ENCODE measurements at regions of chr4 and their contacts with region 1.

Region 1: DNA sequence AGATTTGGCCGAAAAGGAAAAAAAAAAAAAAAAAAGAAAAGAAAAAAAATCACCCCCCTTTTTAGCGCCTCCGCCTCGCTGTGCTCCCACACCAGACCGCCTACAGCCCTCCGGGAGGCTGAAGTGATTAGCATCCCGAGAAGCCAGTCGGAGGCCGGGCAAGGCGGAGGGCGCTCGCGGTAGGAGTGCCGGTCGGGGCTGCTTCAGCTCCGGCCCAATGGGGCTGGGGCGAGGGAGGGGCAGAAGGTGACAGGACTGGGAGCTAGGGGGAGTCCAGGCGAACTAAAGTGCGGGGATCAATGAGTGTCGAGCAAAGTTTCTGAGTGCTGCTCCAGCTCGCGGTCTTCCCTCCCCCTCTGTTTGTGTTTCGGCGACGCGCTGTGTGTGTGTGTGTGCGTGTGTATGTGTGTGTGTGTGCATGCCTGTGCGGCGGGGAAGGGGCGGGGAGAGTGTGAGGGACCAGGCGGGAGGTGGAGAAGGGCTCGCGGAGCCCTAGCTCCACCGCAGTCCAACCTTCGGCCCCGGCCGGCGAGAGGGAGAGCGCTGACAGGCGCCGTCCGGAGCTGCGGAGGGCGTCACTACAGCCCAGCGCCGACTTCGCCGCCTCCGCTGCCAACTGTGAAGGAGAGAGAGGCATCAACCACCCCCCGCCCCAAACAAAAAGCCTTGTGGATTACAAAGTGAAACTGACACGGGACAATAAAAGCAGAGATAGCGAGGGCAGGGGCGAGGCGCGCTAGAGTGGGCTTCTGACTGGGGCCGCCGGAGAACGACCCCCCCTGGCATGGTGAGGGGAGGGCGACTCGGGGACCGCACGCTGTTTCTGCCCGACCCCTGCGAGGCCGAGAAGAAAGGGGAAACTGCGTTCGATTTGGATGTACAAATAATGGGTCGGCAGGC is at the start of gene FAT4:
- DNase-seq: peak; percentile 82
- H3K4me3 ChIP-seq: peak within 1 kb of the TSS; percentile 45 to 69 (median 68)
- H3K27ac ChIP-seq: peak within 1 kb of the TSS; percentile 82 to 93 (median 88)
- H3K4me1 ChIP-seq: peaks cover 0 to 16% (median 9%) of the 10 kb centered on the region in 4 donors
- H3K27me3 ChIP-seq: peaks cover 45% of the 10 kb centered on the region
- CTCF ChIP-seq: no peak
- EP300 ChIP-seq: no peak
- POLR2A ChIP-seq: peak; percentile 68
- total RNA-seq, gene FAT4: 4.1 to 15.9 (median 9.3) TPM

Region 2: DNA sequence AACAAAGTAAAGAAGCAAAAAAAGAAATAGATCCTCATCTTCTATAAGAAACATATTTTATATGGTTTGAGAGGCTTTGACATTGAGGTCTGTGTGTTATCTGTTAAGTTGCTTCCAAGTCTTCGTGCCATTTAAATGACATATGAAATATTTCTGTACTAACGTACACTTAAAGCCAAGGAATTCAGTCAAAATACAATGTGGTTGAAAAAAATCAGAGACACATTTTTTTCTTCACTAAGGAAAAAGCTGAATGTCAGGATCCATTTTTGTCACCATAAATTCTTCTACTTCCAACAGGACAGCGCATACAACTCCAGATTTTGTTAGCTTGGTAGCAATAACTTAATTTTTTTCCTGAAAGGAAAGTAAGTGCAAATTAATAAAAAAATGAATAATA is 168.4 kb after region 1 on chr4:
- in situ Hi-C with region 1: no loop called
- intact Hi-C with region 1: loop called (anchors 10 kb)
- DNase-seq: no peak
- H3K4me3 ChIP-seq: no peak overlapping the region
- H3K27ac ChIP-seq: no peak overlapping the region
- H3K4me1 ChIP-seq: no peaks in the 10 kb centered on the region
- H3K27me3 ChIP-seq: no peaks in the 10 kb centered on the region
- CTCF ChIP-seq: no peak
- EP300 ChIP-seq: no peak
- POLR2A ChIP-seq: no peak

Region 3: DNA sequence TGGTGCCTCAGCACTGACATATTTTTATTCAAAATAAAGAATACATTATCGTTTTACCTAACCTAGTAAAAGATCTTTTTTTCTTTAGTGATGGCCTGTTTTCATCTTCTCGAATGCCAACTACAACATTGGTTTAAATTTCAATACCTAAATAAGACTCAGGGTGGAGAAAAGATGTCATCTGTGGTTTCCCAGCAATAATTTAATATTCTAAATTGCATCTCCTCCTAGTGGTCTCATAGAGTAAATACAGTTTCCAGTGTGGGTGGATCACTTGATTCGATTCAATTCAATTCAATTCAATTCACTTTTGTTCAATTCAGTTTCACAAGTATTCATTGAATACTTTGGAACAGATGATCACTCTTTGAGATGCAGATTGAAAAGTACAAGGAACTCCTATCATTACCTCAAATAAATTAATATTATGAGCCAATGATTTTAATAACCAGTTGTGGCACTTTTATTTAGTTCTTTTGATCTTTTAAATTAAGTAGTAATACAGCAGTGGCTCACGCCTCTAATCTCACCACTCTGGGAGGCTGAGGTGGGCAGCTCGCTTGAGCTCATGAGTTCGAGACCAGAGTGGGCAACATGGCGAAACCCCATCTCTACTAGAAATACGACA is 427.0 kb after region 1 on chr4:
- in situ Hi-C with region 1: loop called (anchors 5 to 25 kb)
- intact Hi-C with region 1: no loop called
- DNase-seq: no peak
- H3K4me3 ChIP-seq: no peak overlapping the region
- H3K27ac ChIP-seq: no peak overlapping the region
- H3K4me1 ChIP-seq: no peaks in the 10 kb centered on the region
- H3K27me3 ChIP-seq: no peaks in the 10 kb centered on the region
- CTCF ChIP-seq: peak in 4 of 5 experiments; percentile 38 to 48 (median 42)
- EP300 ChIP-seq: no peak
- POLR2A ChIP-seq: no peak